Posterior cingulate gyrus (tissue), 11 donors: ENCODE measurements at regions of chr4 and their contacts with region 1.

Region 1: DNA sequence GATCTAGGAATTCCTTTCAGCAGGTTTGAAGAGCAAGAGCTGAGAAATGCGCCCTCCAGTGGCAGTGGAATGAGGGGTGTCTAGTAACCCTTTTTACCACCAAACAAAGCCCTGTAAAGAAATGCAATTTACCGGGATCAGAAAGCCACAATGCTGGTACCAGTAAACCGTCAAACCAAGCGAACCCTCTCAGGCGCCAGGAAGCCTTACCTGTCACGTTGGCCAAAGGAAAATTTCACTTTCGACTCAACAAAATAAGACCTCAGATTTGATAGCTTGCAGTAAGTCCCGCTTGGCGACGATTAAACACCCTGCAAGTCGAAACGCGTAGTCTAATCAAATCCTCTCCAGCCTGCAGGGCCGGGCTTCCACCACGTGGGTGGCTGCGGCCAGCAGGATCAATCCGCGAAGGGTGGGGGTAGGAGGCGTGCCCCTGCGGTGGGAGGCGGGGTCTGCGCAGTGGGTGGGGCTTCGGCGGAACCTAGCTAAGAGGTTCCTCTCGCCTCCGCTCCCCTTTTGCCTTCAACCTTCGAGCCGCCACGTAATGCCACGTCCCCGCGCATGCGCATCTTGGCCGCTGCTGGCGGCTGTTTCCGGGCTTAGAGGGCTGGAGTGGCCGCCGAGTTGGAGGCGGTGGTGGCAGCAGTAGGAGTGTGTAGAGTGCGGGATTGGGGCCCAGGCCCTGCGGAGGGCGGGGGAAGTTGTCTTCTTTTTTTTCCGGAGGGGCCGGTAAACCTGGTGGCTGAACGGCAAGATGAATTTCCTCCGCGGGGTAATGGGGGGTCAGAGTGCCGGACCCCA is at the start of gene USO1:
- DNase-seq: peak; percentile 99 to 100 (median 99)

Region 2: GRCh38 chr4:75514131-75514948 is 209.9 kb before region 1 on chr4 and contains the starts of genes RCHY1 and THAP6:
- intact Hi-C with region 1: loop called (anchors 5 kb)
- DNase-seq: peak; percentile 94 to 99 (median 96)

Region 3: GRCh38 chr4:75673027-75673958 is 51.0 kb before region 1 on chr4 and contains the start of gene G3BP2:
- intact Hi-C with region 1: loop called (anchors 2 kb)
- DNase-seq: peak; percentile 93 to 99 (median 97)

Region 4: DNA sequence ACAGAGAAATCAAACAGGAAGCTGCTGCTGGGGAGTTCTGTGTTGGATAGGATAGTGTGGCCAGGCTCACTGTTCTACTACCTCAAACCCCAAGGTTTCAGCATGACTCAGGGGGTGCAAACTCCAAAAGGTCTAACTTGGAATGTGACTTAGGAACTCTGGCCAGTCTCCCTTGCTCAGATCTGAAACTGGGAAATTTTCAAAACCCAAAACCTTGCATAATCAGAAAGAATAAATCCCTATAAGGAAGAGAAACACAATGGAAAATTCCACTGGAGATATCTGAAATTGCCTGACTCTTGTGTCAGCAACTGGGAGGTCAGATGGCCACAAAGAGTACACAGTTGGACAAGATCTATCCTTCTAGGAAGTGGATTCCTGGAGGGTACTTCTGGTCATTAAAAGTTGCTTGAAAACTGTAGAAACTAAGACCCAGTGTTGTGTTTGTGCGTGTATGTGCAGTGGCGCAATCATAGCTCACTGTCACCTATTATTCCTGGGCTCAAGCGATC is 119.9 kb after region 1 on chr4:
- intact Hi-C with region 1: loop called (anchors 10 kb)
- DNase-seq: no peak